ENCODE measurements at regions of chr1 and their contacts with region 1.

Region 1: GRCh38 chr1:121558514-121558913 is 373.7 kb downstream of the SRGAP2C start:
- DNase-seq: no peak
- ATAC-seq: no peak
- H3K4me3 ChIP-seq: no peak overlapping the region
- H3K4me3 Mint-ChIP-seq: peak overlapping the region in 5 of 10 donors; percentile 36 to 68 (median 48)
- H3K27ac ChIP-seq: no peak overlapping the region
- H3K27ac Mint-ChIP-seq: peak overlapping the region in 3 of 9 donors; percentile 74 to 85 (median 81)
- H3K4me1 ChIP-seq: peaks cover 4 to 6% of the 10 kb centered on the region in 2 donors
- H3K4me1 Mint-ChIP-seq: peaks cover 5 to 57% (median 19%) of the 10 kb centered on the region in 7 donors
- H3K27me3 ChIP-seq: no peaks in the 10 kb centered on the region
- H3K27me3 Mint-ChIP-seq: no peaks in the 10 kb centered on the region

Region 2: GRCh38 chr1:121443001-121443540 is 115.4 kb before region 1 on chr1:
- CTCF ChIA-PET with region 1: interaction called, 4 read pairs
- POLR2A ChIA-PET with region 1: no interaction called
- intact Hi-C with region 1: loop called (anchors 5 kb)
- DNase-seq: no peak
- ATAC-seq: no peak
- H3K4me3 ChIP-seq: no peak overlapping the region
- H3K4me3 Mint-ChIP-seq: no peak overlapping the region
- H3K27ac ChIP-seq: no peak overlapping the region
- H3K27ac Mint-ChIP-seq: no peak overlapping the region
- H3K4me1 ChIP-seq: no peaks in the 10 kb centered on the region
- H3K4me1 Mint-ChIP-seq: peaks cover 0 to 17% (median 2%) of the 10 kb centered on the region in 7 donors
- H3K27me3 ChIP-seq: no peaks in the 10 kb centered on the region
- H3K27me3 Mint-ChIP-seq: peaks cover 0 to 4% (median 0%) of the 10 kb centered on the region in 5 donors

Region 3: DNA sequence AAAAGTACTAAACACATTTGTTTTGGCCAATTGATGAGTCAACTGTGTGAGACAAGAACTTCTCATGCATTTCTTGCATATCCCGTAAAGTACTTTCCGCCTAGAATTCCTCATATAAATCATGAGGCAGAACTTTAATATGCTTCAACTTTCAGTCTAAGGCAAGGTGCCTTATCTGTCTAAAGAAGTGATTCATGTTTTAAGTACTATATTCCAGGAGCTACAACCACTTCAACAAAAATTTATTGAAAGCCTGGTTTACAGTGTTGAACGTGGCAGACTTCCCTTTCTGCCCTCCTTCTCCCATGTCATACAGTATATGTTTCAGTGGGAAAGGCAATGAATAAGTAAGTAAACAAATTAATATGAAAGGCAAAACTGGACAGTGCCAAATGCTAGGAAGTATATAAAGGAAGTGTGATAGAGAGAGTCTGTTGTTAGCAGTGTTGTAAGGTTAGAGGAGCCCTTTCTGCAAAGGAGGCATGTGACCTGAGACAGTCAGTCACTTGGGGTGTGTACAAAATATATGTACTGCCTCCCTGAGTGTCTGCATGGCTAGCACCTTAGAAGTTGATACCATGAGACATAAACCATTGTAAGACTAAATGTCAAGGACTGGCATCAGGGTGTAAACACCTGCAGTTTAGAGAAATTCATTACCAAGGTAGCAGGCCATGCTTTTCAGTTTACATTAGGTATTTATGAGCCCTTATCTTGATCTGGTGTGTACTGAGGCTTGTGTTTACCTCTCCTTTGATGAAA is 11.5 kb before region 1 on chr1:
- CTCF ChIA-PET with region 1: no interaction called
- POLR2A ChIA-PET with region 1: no interaction called
- intact Hi-C with region 1: loop called in 1 of 2 experiments (anchors 1 kb)
- DNase-seq: no peak
- ATAC-seq: peak; percentile 45
- H3K4me3 ChIP-seq: no peak overlapping the region
- H3K4me3 Mint-ChIP-seq: peak overlapping the region in 1 of 10 donors; percentile 23
- H3K27ac ChIP-seq: no peak overlapping the region
- H3K27ac Mint-ChIP-seq: peak overlapping the region in 5 of 9 donors; percentile 0 to 27 (median 19)
- H3K4me1 ChIP-seq: peaks cover 9 to 20% of the 10 kb centered on the region in 2 donors
- H3K4me1 Mint-ChIP-seq: peaks cover 22 to 54% (median 49%) of the 10 kb centered on the region in 7 donors
- H3K27me3 ChIP-seq: no peaks in the 10 kb centered on the region
- H3K27me3 Mint-ChIP-seq: no peaks in the 10 kb centered on the region

Region 4: GRCh38 chr1:121569428-121569827 is 10.9 kb after region 1 on chr1:
- CTCF ChIA-PET with region 1: no interaction called
- POLR2A ChIA-PET with region 1: no interaction called
- intact Hi-C with region 1: loop called in 1 of 2 experiments (anchors 2 kb)
- DNase-seq: peak in 1 of 9 donors; percentile 10
- ATAC-seq: no peak
- H3K4me3 ChIP-seq: no peak overlapping the region
- H3K4me3 Mint-ChIP-seq: peak overlapping the region in 6 of 10 donors; percentile 4 to 62 (median 12)
- H3K27ac ChIP-seq: no peak overlapping the region
- H3K27ac Mint-ChIP-seq: peak overlapping the region in 7 of 9 donors; percentile 5 to 76 (median 41)
- H3K4me1 ChIP-seq: no peaks in the 10 kb centered on the region
- H3K4me1 Mint-ChIP-seq: peaks cover 7 to 24% (median 11%) of the 10 kb centered on the region in 7 donors
- H3K27me3 ChIP-seq: no peaks in the 10 kb centered on the region
- H3K27me3 Mint-ChIP-seq: no peaks in the 10 kb centered on the region

Region 5: GRCh38 chr1:121595089-121595488 is 36.6 kb after region 1 on chr1:
- CTCF ChIA-PET with region 1: no interaction called
- POLR2A ChIA-PET with region 1: no interaction called
- intact Hi-C with region 1: loop called in 1 of 2 experiments (anchors 5 kb)
- DNase-seq: no peak
- ATAC-seq: no peak
- H3K4me3 ChIP-seq: no peak overlapping the region
- H3K4me3 Mint-ChIP-seq: no peak overlapping the region
- H3K27ac ChIP-seq: no peak overlapping the region
- H3K27ac Mint-ChIP-seq: peak overlapping the region in 6 of 9 donors; percentile 5 to 72 (median 26)
- H3K4me1 ChIP-seq: peaks cover 0 to 5% of the 10 kb centered on the region in 2 donors
- H3K4me1 Mint-ChIP-seq: peaks cover 0 to 37% (median 21%) of the 10 kb centered on the region in 7 donors
- H3K27me3 ChIP-seq: no peaks in the 10 kb centered on the region
- H3K27me3 Mint-ChIP-seq: no peaks in the 10 kb centered on the region